ENCODE measurements at regions of chr7 and their contacts with region 1.

Region 1: GRCh38 chr7:106461993-106462859 is 177.4 kb upstream of the NAMPT start:
- DNase-seq: peak in 2 of 5 donors; percentile 34 to 47
- H3K4me3 ChIP-seq: no peak overlapping the region
- H3K27ac ChIP-seq: no peak overlapping the region
- H3K4me1 ChIP-seq: peaks cover 0 to 13% (median 9%) of the 10 kb centered on the region in 3 donors
- H3K27me3 ChIP-seq: no peaks in the 10 kb centered on the region
- CTCF ChIP-seq: peak; percentile 49

Region 2: GRCh38 chr7:106176414-106177299 is 285.6 kb before region 1 on chr7:
- intact Hi-C with region 1: loop called (anchors 5 kb)
- DNase-seq: peak; percentile 87 to 93 (median 90)
- H3K4me3 ChIP-seq: no peak overlapping the region
- H3K27ac ChIP-seq: no peak overlapping the region
- H3K4me1 ChIP-seq: no peaks in the 10 kb centered on the region
- H3K27me3 ChIP-seq: no peaks in the 10 kb centered on the region
- CTCF ChIP-seq: peak; percentile 95

Region 3: GRCh38 chr7:106618480-106618879 is 156.3 kb after region 1 on chr7:
- intact Hi-C with region 1: no loop called
- DNase-seq: peak in 2 of 5 donors; percentile 38 to 76
- H3K4me3 ChIP-seq: no peak overlapping the region
- H3K27ac ChIP-seq: no peak overlapping the region
- H3K4me1 ChIP-seq: peaks cover 0 to 5% (median 0%) of the 10 kb centered on the region in 3 donors
- H3K27me3 ChIP-seq: no peaks in the 10 kb centered on the region
- CTCF ChIP-seq: no peak